ENCODE measurements at regions of chr5 and their contacts with region 1.

Region 1: GRCh38 chr5:66945389-66946349 is 250.9 kb downstream of the CD180 start:
- DNase-seq: peak; percentile 65
- H3K4me3 ChIP-seq: no peak overlapping the region
- H3K27ac ChIP-seq: peak overlapping the region; percentile 52
- H3K4me1 ChIP-seq: peaks cover 19% of the 10 kb centered on the region
- H3K27me3 ChIP-seq: no peaks in the 10 kb centered on the region
- CTCF ChIP-seq: no peak
- POLR2A ChIP-seq: no peak

Region 2: GRCh38 chr5:66933066-66933465 is 12.6 kb before region 1 on chr5:
- CTCF ChIA-PET with region 1: interaction called, 19 read pairs
- POLR2A ChIA-PET with region 1: no interaction called
- dilution Hi-C with region 1: no loop called
- intact Hi-C with region 1: no loop called
- DNase-seq: peak; percentile 84
- H3K4me3 ChIP-seq: no peak overlapping the region
- H3K27ac ChIP-seq: peak overlapping the region; percentile 79
- H3K4me1 ChIP-seq: peaks cover 15% of the 10 kb centered on the region
- H3K27me3 ChIP-seq: no peaks in the 10 kb centered on the region
- CTCF ChIP-seq: no peak
- POLR2A ChIP-seq: no peak

Region 3: GRCh38 chr5:67133776-67134175 is 188.1 kb after region 1 on chr5:
- CTCF ChIA-PET with region 1: no interaction called
- POLR2A ChIA-PET with region 1: no interaction called
- dilution Hi-C with region 1: no loop called
- intact Hi-C with region 1: no loop called
- DNase-seq: no peak
- H3K4me3 ChIP-seq: no peak overlapping the region
- H3K27ac ChIP-seq: no peak overlapping the region
- H3K4me1 ChIP-seq: no peaks in the 10 kb centered on the region
- H3K27me3 ChIP-seq: no peaks in the 10 kb centered on the region
- CTCF ChIP-seq: no peak
- POLR2A ChIP-seq: no peak

Region 4: GRCh38 chr5:67289763-67290521 is 344.3 kb after region 1 on chr5:
- CTCF ChIA-PET with region 1: no interaction called
- POLR2A ChIA-PET with region 1: no interaction called
- dilution Hi-C with region 1: no loop called
- intact Hi-C with region 1: no loop called
- DNase-seq: no peak
- H3K4me3 ChIP-seq: no peak overlapping the region
- H3K27ac ChIP-seq: no peak overlapping the region
- H3K4me1 ChIP-seq: peaks cover 9% of the 10 kb centered on the region
- H3K27me3 ChIP-seq: no peaks in the 10 kb centered on the region
- CTCF ChIP-seq: no peak
- POLR2A ChIP-seq: no peak